H1 (cell line): ENCODE measurements at regions of chr3 and their contacts with region 1.

Region 1: DNA sequence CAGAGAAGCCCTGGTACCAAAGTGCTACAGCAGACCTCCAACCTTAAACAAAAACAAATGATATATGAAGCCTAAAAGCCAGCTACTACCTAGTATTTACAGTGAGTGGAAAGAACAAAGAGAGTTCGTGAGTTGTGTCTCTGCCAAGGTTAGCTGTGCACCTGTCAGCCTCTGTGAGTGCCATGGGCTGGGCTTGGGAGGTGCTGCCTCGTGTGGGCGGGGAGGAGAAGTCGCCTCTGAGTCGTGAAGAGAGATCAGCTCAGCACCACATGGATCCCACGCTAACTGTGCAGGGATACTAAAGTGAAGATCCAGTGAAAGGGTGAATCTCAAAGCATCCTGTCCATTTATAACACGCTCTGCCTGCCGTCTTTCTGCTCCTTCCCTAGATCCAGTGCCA is 101.9 kb downstream of the CHDH start:
- DNase-seq: peak in 1 of 2 experiments; percentile 7
- H3K4me3 ChIP-seq: no peak overlapping the region
- H3K27ac ChIP-seq: no peak overlapping the region
- H3K4me1 ChIP-seq: peaks cover 6 to 19% (median 15%) of the 10 kb centered on the region in 4 experiments
- H3K27me3 ChIP-seq: no peaks in the 10 kb centered on the region; a peak in 1 of 7 replicates
- CTCF ChIP-seq: peak; percentile 17 to 61 (median 58); a peak in 3 of 4 replicates
- EP300 ChIP-seq: no peak
- POLR2A ChIP-seq: no peak
- RAD21 ChIP-seq: peak; percentile 40 to 42

Region 2: DNA sequence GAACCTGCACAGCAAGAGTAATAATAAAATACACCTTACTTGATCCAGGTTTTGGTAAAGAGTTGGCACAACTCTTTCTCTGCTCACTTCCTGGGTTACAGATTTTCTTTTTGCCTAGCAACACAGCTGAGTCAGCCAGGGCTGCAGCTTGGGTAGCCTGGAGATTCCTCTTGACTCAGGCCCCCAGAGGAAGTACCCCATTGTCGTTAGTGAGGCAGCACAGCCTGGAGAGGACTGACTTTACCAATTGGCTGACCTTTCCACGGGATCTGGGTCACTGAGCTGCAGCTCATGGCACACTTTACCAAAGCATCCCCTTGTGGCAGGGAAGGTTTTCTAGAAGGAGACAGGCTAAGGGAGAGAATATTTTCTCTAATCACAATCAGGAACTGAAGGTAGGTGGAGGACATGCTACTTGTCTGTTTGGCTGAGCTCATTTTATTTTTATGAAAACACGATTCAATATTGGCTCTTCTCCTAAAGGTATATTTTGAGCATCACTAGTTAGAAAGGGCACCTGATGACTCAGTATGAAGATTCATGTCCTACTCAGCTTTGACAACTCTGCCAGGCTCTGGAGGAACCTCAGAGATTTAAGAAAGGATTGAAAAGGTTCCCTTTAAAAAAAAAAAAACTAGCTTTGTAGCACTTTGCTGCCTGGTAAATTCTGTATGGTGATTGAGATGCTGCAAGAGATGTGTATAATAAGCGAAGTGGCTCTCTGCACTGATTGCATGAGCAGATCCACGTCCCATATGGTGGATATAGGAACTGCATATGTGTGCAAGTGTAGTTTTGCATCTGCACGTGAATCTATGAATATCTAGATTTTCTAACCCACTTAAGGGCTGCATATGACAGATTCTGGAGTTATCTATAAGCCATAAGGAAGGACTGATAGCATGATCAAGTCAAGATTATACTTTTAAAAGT is 22.9 kb before region 1 on chr3:
- CTCF ChIA-PET with region 1: interaction called, 15 read pairs
- POLR2A ChIA-PET with region 1: no interaction called
- DNase-seq: no peak
- H3K4me3 ChIP-seq: no peak overlapping the region
- H3K27ac ChIP-seq: no peak overlapping the region
- H3K4me1 ChIP-seq: peaks cover 0 to 3% (median 0%) of the 10 kb centered on the region in 4 experiments; a peak in 1 of 7 replicates
- H3K27me3 ChIP-seq: no peaks in the 10 kb centered on the region
- CTCF ChIP-seq: peak in 1 of 3 experiments; percentile 23; a peak in 1 of 4 replicates
- EP300 ChIP-seq: no peak
- POLR2A ChIP-seq: no peak
- RAD21 ChIP-seq: peak in 1 of 2 experiments; percentile 23; a peak in 2 of 4 replicates